Activated CD4-positive, alpha-beta memory T cell treated with anti-CD3 and anti-CD28 coated beads for 36 hours (primary cell): ENCODE measurements at regions of chr12 and their contacts with region 1.

Region 1: GRCh38 chr12:48795480-48796455 is 6.9 kb upstream of the ADCY6 start:
- DNase-seq: peak; percentile 71
- H3K4me3 Mint-ChIP-seq: no peak overlapping the region
- H3K27ac Mint-ChIP-seq: no peak overlapping the region
- H3K4me1 Mint-ChIP-seq: peaks cover 4% of the 10 kb centered on the region
- H3K27me3 Mint-ChIP-seq: peaks cover 3% of the 10 kb centered on the region

Region 2: GRCh38 chr12:48542300-48542928 is 253.4 kb before region 1 on chr12:
- CTCF ChIA-PET with region 1: interaction called, 13 read pairs
- POLR2A ChIA-PET with region 1: no interaction called
- intact Hi-C with region 1: loop called (anchors 2 kb)
- DNase-seq: peak; percentile 75
- H3K4me3 Mint-ChIP-seq: no peak overlapping the region
- H3K27ac Mint-ChIP-seq: no peak overlapping the region
- H3K4me1 Mint-ChIP-seq: peaks cover 11% of the 10 kb centered on the region
- H3K27me3 Mint-ChIP-seq: no peaks in the 10 kb centered on the region

Region 3: DNA sequence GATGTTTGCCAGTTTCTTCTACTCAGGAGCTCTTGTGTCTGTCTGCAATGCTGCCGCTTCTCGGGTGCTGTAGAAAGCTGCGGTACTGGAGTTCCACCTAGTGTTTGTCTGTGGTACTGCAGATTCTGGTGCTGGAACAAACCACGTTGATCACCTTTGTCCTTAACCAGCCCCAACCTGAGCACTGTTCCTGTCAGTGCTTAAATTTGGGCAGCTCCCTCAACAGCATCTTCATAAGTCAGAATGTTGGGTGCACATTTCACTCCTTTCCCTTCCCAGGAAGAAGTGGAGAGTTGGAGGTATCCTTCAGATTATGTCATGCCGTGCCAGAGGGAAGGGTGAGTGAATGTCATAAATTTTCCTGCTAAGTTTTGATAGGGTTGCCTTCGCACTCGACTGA is 177.2 kb before region 1 on chr12:
- CTCF ChIA-PET with region 1: interaction called, 13 read pairs
- POLR2A ChIA-PET with region 1: no interaction called
- intact Hi-C with region 1: loop called (anchors 10 kb)
- DNase-seq: peak; percentile 83
- H3K4me3 Mint-ChIP-seq: no peak overlapping the region
- H3K27ac Mint-ChIP-seq: no peak overlapping the region
- H3K4me1 Mint-ChIP-seq: no peaks in the 10 kb centered on the region
- H3K27me3 Mint-ChIP-seq: peaks cover 22% of the 10 kb centered on the region

Region 4: GRCh38 chr12:48629541-48629940 is 166.2 kb before region 1 on chr12:
- CTCF ChIA-PET with region 1: no interaction called
- POLR2A ChIA-PET with region 1: no interaction called
- intact Hi-C with region 1: loop called (anchors 10 kb)
- DNase-seq: no peak
- H3K4me3 Mint-ChIP-seq: no peak overlapping the region
- H3K27ac Mint-ChIP-seq: no peak overlapping the region
- H3K4me1 Mint-ChIP-seq: no peaks in the 10 kb centered on the region
- H3K27me3 Mint-ChIP-seq: peaks cover 10% of the 10 kb centered on the region

Region 5: GRCh38 chr12:48681738-48682532 is 113.8 kb before region 1 on chr12 and contains the start of gene KANSL2:
- CTCF ChIA-PET with region 1: interaction called, 9 read pairs
- POLR2A ChIA-PET with region 1: no interaction called
- intact Hi-C with region 1: loop called (anchors 5 kb)
- DNase-seq: peak; percentile 99
- H3K4me3 Mint-ChIP-seq: peak within 1 kb of the TSS; percentile 99
- H3K27ac Mint-ChIP-seq: peak within 1 kb of the TSS; percentile 94
- H3K4me1 Mint-ChIP-seq: peaks cover 41% of the 10 kb centered on the region
- H3K27me3 Mint-ChIP-seq: no peaks in the 10 kb centered on the region
- total RNA-seq, gene KANSL2: 45.7 to 48.4 TPM

Region 6: GRCh38 chr12:48758221-48758620 is 37.5 kb before region 1 on chr12:
- CTCF ChIA-PET with region 1: interaction called, 247 read pairs
- POLR2A ChIA-PET with region 1: interaction called, 4 read pairs
- intact Hi-C with region 1: loop called (anchors 1 kb)
- DNase-seq: no peak
- H3K4me3 Mint-ChIP-seq: no peak overlapping the region
- H3K27ac Mint-ChIP-seq: no peak overlapping the region
- H3K4me1 Mint-ChIP-seq: no peaks in the 10 kb centered on the region
- H3K27me3 Mint-ChIP-seq: no peaks in the 10 kb centered on the region

Region 7: GRCh38 chr12:48826209-48826894 is 30.6 kb after region 1 on chr12:
- CTCF ChIA-PET with region 1: no interaction called
- POLR2A ChIA-PET with region 1: no interaction called
- intact Hi-C with region 1: no loop called
- DNase-seq: no peak
- H3K4me3 Mint-ChIP-seq: no peak overlapping the region
- H3K27ac Mint-ChIP-seq: no peak overlapping the region
- H3K4me1 Mint-ChIP-seq: peaks cover 10% of the 10 kb centered on the region
- H3K27me3 Mint-ChIP-seq: no peaks in the 10 kb centered on the region